ENCODE measurements at regions of chr20 and their contacts with region 1.

Region 1: DNA sequence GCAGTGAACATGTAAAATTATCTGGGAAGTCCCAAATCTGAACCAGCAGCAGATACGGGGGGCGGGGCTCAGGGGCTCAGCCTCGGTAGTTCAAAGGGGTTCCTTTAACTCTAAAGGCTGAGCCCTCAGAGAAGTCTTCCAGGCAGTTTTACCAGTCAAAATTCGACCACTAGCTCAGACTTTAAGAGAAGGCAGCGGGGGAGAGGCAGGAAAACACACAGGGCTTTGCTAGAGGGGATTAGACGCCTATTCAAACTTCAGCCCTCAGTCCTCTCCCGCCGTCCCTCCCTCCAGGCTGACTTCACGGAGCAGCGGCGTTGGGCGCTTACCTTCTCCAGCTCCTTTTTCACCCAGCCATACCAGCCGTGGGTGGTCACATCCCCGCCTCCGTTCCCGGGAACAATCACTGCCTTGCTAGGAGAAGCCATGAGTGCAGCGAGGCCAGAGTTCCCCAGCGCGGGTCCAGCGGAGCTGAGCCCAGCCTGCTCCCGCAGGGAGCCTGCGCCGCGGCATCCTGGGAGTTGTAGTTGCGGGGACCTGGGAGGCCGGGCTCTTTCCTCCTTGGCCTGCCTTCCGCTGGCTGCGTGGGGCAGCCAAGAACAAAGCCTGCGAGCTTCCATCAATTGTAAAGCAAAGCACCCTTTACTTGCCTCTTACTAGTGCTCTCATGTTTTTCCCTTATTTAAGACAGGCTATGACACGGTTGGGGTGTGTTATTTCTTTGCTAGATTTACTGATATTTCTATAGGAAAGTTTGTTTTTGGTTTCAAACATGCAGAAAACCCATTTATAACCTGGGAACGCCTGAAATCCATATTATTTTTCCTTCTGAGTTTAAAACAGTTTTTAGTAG is at the start of gene RBBP9:
- DNase-seq: peak; percentile 84
- ATAC-seq: peak; percentile 99
- H3K4me3 Mint-ChIP-seq: peak within 1 kb of the TSS; percentile 99
- H3K27ac Mint-ChIP-seq: peak within 1 kb of the TSS; percentile 86
- H3K4me1 Mint-ChIP-seq: peaks cover 22% of the 10 kb centered on the region
- H3K27me3 Mint-ChIP-seq: no peaks in the 10 kb centered on the region
- total RNA-seq, gene RBBP9: 13.4 to 13.5 TPM

Region 2: DNA sequence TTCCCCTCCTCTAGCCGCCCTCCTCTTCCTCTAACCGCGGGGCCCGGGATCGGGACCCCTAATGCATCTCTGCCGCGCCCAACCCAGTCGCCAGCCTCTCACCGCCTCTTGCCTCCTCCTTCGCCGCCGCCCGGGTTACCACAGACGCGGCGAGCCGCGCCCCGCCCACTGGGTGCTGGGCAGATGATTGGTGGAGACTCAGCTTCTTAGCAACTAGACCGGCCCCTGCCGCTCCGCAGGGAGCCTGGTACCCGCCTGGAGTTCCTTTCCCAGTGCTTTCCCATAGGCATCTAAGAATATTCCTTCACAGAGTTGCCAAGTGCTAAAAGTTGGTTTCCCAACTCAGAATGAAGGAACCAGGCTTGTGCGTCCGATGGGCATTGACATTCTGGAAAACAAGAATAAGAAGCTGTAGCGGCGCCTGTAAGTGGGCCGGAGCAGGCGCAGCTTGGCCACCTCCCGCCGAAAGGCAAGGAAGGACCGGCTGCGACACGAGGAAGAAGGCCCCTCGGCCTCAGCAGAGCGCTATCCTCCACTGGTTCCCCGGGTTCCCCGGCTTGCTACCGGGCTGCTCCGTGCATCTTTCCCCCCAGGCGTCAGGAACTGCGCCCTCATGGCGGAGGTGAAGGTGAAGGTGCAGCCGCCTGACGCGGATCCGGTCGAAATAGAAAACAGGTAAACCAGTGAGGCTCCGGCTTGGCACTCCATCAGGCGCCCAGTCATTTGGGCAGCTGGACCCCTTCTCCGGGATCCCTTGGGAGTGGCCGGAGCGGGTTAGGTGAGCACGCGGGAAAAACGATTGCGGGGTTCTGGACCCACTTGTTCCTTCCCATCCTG is 29.9 kb before region 1 on chr20 and contains the starts of genes DZANK1 and POLR3F:
- CTCF ChIA-PET with region 1: interaction called, 13 read pairs
- DNase-seq: peak; percentile 95
- ATAC-seq: peak; percentile 98
- H3K4me3 Mint-ChIP-seq: peak within 1 kb of the TSS; percentile 94
- H3K27ac Mint-ChIP-seq: peak within 1 kb of the TSS; percentile 88
- H3K4me1 Mint-ChIP-seq: peaks cover 30% of the 10 kb centered on the region
- H3K27me3 Mint-ChIP-seq: no peaks in the 10 kb centered on the region
- total RNA-seq, gene DZANK1: 1.7 to 2.0 TPM
- total RNA-seq, gene POLR3F: 7.3 to 11.6 TPM

Region 3: DNA sequence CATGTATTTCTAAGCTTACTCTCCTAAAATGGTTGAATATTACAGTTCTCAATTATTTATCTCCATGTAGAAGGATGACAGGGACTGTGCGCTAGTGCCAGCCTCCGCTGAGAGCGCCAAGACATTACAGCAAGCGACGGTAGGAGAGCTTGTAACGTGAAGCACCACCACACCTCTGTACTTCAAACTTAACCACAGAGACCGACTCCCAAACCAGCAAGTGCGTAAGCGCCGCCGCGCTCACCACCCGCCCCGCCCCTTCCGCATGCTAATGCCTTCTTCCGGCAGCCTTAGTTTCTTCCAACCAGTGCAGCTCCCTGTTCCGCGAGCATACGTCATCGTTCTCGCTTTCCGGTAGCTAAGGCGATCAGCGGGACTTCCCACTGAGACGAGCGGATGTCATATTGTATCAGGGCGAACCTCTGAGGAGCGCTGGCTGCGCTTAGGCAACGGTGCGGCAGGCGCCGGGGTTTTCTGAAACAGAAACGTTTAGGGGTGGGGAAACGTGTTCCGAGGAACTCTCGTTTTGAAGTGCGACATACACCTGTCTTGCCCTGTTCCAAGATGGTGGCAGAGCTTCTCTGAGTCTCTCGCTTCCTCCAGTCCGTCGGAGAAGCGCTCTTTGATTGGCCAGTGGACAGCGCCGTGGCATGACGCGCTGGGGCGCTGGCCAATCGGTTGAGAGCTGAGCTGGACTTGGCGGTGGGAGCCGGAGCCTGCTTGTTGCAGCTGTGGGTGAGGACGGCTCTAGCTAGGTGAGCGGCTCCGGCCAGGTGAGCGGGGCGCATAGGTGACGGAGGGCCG is 10.5 kb after region 1 on chr20 and contains the start of gene SEC23B:
- CTCF ChIA-PET with region 1: interaction called, 39 read pairs
- DNase-seq: peak; percentile 98
- ATAC-seq: peak; percentile 96
- H3K4me3 Mint-ChIP-seq: peak within 1 kb of the TSS; percentile 100
- H3K27ac Mint-ChIP-seq: peak within 1 kb of the TSS; percentile 100
- H3K4me1 Mint-ChIP-seq: peaks cover 53% of the 10 kb centered on the region
- H3K27me3 Mint-ChIP-seq: peaks cover 2% of the 10 kb centered on the region
- total RNA-seq, gene SEC23B: 63.0 to 97.8 TPM